ENCODE measurements at regions of chr6 and their contacts with region 1.

Region 1: GRCh38 chr6:33317669-33318425 is at the start of gene ZBTB22:
- DNase-seq: peak; percentile 98
- H3K4me3 ChIP-seq: peak within 1 kb of the TSS; percentile 45 to 57 (median 51)
- H3K27ac ChIP-seq: peak within 1 kb of the TSS; percentile 65
- H3K4me1 ChIP-seq: peaks cover 51% of the 10 kb centered on the region
- H3K27me3 ChIP-seq: no peaks in the 10 kb centered on the region
- CTCF ChIP-seq: no peak
- total RNA-seq, gene ZBTB22: 11.5 to 16.3 TPM

Region 2: DNA sequence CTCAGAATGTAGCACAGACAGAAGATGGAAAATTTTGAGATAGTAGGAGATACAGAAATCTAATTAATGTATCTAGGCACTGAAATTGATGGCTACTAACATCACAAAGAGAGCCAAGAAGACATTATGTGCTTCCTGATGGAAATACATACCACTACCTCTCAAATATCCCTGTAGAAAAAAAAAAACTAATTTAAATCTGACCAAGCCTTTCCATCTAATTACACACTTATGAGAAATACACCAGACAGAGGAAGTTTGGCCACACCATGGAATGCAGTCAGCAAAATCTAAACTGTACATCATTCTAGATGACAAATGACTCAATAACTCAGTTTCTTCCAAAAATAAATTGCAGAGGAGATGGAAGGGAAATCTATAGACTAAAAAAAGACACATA is 65.1 kb before region 1 on chr6:
- CTCF ChIA-PET with region 1: no interaction called
- dilution Hi-C with region 1: no loop called
- in situ Hi-C with region 1: no loop called
- intact Hi-C with region 1: no loop called
- DNase-seq: no peak
- H3K4me3 ChIP-seq: no peak overlapping the region
- H3K27ac ChIP-seq: no peak overlapping the region
- H3K4me1 ChIP-seq: peaks cover 37% of the 10 kb centered on the region
- H3K27me3 ChIP-seq: no peaks in the 10 kb centered on the region
- CTCF ChIP-seq: no peak

Region 3: GRCh38 chr6:33344701-33345697 is 27.2 kb after region 1 on chr6:
- CTCF ChIA-PET with region 1: no interaction called
- dilution Hi-C with region 1: no loop called
- in situ Hi-C with region 1: no loop called
- intact Hi-C with region 1: loop called (anchors 1 kb)
- DNase-seq: peak; percentile 76
- H3K4me3 ChIP-seq: no peak overlapping the region
- H3K27ac ChIP-seq: no peak overlapping the region
- H3K4me1 ChIP-seq: peaks cover 10% of the 10 kb centered on the region
- H3K27me3 ChIP-seq: no peaks in the 10 kb centered on the region
- CTCF ChIP-seq: peak; percentile 33 to 65

Region 4: GRCh38 chr6:33375143-33375671 is 57.4 kb after region 1 on chr6:
- CTCF ChIA-PET with region 1: interaction called, 14 read pairs
- dilution Hi-C with region 1: loop called (anchors 5 kb)
- in situ Hi-C with region 1: no loop called
- intact Hi-C with region 1: no loop called
- DNase-seq: peak; percentile 73
- H3K4me3 ChIP-seq: no peak overlapping the region
- H3K27ac ChIP-seq: peak overlapping the region; percentile 60
- H3K4me1 ChIP-seq: peaks cover 25% of the 10 kb centered on the region
- H3K27me3 ChIP-seq: no peaks in the 10 kb centered on the region
- CTCF ChIP-seq: no peak

Region 5: DNA sequence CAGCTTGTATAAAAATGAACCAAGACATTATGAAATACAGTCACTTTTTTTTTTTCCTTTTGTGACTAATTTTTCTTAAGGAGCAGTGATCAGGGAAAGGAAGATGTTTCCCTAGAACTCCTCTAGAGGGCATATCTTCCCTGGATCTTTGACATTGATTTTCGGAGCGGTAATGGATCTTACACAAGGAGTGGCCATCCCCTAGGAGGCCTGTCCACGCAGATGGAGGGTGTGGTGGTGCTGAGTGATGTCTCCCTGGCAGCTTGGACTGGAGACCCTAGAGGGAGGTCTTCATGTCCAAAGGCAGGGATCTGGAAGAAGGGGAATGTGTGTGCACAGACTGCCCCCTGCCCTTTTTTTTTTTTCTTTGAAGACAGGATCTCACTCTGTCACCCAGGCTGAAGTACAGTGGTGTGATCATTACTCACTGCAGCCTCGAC is 66.8 kb after region 1 on chr6:
- CTCF ChIA-PET with region 1: no interaction called
- dilution Hi-C with region 1: loop called (anchors 5 kb)
- in situ Hi-C with region 1: no loop called
- intact Hi-C with region 1: no loop called
- DNase-seq: peak; percentile 62
- H3K4me3 ChIP-seq: no peak overlapping the region
- H3K27ac ChIP-seq: no peak overlapping the region
- H3K4me1 ChIP-seq: peaks cover 7% of the 10 kb centered on the region
- H3K27me3 ChIP-seq: no peaks in the 10 kb centered on the region
- CTCF ChIP-seq: peak; percentile 49 to 62

Region 6: DNA sequence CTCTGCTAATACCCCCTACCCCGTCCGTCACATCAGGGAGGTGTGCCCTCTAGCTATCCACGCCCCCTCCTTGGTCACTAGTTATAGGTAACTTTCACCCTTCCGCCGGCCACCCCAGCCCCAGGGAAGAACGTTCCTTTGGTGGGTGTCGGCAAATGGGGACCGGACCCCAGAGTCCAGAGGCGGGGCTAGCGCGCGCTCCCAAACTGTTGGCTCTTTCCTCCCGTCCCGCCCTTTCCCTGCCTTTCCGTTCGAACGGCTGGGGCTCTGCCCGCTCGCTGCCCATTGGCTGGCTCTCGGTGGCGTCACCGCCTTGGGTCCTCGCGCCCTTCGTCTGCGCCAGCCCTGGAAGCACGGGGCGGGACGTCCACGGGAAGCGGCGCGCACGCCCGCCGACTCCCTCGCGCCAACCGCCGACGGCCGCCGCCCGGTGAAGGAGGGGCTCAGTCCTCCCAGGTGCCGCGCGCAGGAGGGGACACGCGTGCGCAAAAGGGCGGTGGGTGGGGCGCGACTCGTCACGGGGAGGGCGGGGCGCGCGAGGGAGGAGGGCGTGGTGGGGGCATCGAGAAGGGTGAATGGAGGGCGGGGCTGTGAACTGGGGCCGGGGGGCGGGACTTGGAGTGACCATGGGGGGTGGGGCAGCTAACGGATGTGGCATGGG is 92.3 kb after region 1 on chr6:
- CTCF ChIA-PET with region 1: no interaction called
- dilution Hi-C with region 1: loop called (anchors 5 kb)
- in situ Hi-C with region 1: no loop called
- intact Hi-C with region 1: no loop called
- DNase-seq: peak; percentile 99
- H3K4me3 ChIP-seq: peak overlapping the region; percentile 56 to 80 (median 64)
- H3K27ac ChIP-seq: peak overlapping the region; percentile 88
- H3K4me1 ChIP-seq: peaks cover 6% of the 10 kb centered on the region
- H3K27me3 ChIP-seq: no peaks in the 10 kb centered on the region
- CTCF ChIP-seq: no peak

Measured in mammary epithelial cell (primary cell).